Naive thymus-derived CD4-positive, alpha-beta T cell (primary cell): ENCODE measurements at regions of chr5 and their contacts with region 1.

Region 1: DNA sequence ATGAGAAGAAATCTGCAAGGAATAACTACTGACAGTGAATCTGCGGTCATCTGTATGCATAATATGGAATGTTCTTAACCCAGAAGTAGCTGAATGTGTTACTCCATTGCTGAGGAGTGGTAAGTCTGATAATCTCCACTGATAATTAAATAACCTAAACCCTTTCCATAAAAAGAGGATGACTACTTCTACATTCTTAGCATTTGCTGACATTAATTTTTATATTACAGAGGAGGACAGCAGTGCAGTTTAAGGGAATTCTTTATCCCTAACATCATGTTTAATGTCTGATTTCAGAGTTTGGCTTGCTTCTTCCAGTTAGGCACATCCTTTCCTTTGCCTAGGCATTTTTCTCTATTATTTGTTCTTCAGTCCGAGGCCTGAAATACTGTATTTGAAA is 52.2 kb downstream of the CDC42SE2 start:
- DNase-seq: no peak
- ATAC-seq: peak; percentile 12
- H3K4me3 ChIP-seq: no peak overlapping the region
- H3K4me3 Mint-ChIP-seq: peak overlapping the region in 6 of 10 donors; percentile 3 to 52 (median 35)
- H3K27ac ChIP-seq: no peak overlapping the region
- H3K27ac Mint-ChIP-seq: peak overlapping the region in 6 of 9 donors; percentile 12 to 79 (median 24)
- H3K4me1 ChIP-seq: peaks cover 22 to 32% of the 10 kb centered on the region in 2 donors
- H3K4me1 Mint-ChIP-seq: peaks cover 51 to 93% (median 78%) of the 10 kb centered on the region in 7 donors
- H3K27me3 ChIP-seq: no peaks in the 10 kb centered on the region
- H3K27me3 Mint-ChIP-seq: no peaks in the 10 kb centered on the region

Region 2: DNA sequence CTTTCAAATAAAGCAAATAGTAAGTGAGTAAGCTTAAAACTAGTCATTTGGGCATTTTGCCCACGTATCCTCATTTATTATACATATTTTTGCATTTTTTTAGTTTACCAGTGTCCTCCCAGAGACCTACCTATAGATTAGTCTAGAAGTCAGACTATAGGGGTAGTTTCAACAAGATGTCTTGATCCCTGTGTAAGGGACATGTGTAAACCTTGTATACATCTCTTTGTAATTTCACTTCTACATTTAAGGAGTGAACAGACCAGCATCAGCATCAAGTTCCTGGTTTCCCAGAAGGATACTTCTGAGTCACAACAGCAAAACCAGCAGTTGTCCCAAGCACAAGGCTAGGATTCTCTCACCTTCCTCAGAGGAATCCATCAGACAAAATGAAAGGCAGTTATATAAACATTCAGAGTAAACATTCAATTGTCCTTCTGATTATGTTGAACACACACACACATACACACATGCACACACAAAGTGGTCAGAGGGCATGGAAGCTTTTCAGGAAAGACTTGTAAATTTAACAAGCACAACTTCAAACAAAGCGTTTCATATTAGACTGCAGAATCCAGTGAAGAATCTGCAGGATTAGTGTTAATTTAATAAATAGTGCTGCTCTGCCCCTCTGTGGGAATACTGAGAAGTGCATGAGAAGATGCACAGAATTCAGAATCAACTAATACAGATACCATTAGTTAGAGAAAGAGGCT is 206.3 kb before region 1 on chr5:
- CTCF ChIA-PET with region 1: no interaction called
- POLR2A ChIA-PET with region 1: no interaction called
- intact Hi-C with region 1: no loop called
- DNase-seq: peak in 7 of 9 donors; percentile 13 to 66 (median 57)
- ATAC-seq: peak; percentile 87
- H3K4me3 ChIP-seq: no peak overlapping the region
- H3K4me3 Mint-ChIP-seq: peak overlapping the region in 1 of 10 donors; percentile 7
- H3K27ac ChIP-seq: no peak overlapping the region
- H3K27ac Mint-ChIP-seq: no peak overlapping the region
- H3K4me1 ChIP-seq: no peaks in the 10 kb centered on the region
- H3K4me1 Mint-ChIP-seq: peaks cover 0 to 17% (median 9%) of the 10 kb centered on the region in 7 donors
- H3K27me3 ChIP-seq: no peaks in the 10 kb centered on the region
- H3K27me3 Mint-ChIP-seq: no peaks in the 10 kb centered on the region

Region 3: GRCh38 chr5:131296213-131296672 is 19.8 kb before region 1 on chr5:
- CTCF ChIA-PET with region 1: no interaction called
- POLR2A ChIA-PET with region 1: interaction called, 3 read pairs
- intact Hi-C with region 1: loop called in 1 of 2 experiments (anchors 2 kb)
- DNase-seq: peak in 1 of 9 donors; percentile 43
- ATAC-seq: peak; percentile 76
- H3K4me3 ChIP-seq: no peak overlapping the region
- H3K4me3 Mint-ChIP-seq: peak overlapping the region; percentile 56 to 76 (median 68)
- H3K27ac ChIP-seq: peak overlapping the region; percentile 40
- H3K27ac Mint-ChIP-seq: peak overlapping the region; percentile 72 to 90 (median 77)
- H3K4me1 ChIP-seq: peaks cover 59 to 88% of the 10 kb centered on the region in 2 donors
- H3K4me1 Mint-ChIP-seq: peaks cover 56 to 92% (median 76%) of the 10 kb centered on the region in 7 donors
- H3K27me3 ChIP-seq: no peaks in the 10 kb centered on the region
- H3K27me3 Mint-ChIP-seq: no peaks in the 10 kb centered on the region

Region 4: DNA sequence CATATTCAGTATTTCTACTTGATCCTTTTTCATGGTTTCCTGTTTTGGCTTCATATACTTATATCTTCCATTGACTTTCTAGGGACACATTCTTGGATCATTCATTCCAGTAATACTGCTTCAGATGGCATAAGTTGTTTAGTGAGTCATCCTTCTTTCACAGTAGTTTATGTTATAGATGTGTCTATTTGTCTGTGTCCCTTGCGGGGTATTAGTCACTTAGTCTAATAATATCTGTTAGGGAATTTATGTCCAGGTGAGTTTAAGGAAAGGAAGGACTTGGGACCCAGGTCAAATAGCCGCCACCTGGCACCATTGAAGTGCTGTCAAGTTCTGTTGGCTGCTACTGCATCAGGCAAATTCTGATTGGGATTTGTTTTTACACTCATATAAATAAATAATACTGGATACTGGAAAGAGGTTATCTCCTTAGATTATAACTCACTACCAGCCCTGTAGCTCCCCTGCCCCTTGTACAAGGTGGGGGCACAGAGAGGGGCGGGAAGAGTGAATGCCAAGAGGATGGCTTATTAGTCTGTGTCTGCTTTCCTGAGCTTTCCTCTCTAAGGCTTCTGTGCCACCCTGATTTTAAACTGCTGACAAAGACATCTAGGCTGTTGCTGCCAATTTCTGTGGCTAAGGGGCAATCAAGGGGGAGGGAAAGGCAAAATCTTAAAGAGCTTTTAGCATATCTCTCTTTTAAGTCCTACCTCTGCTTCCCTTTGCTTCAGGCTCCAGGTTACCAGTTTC is 12.7 kb after region 1 on chr5:
- CTCF ChIA-PET with region 1: interaction called, 5 read pairs
- POLR2A ChIA-PET with region 1: interaction called, 5 read pairs
- intact Hi-C with region 1: loop called in 1 of 2 experiments (anchors 2 kb)
- DNase-seq: peak in 1 of 9 donors; percentile 11
- ATAC-seq: peak; percentile 18
- H3K4me3 ChIP-seq: no peak overlapping the region
- H3K4me3 Mint-ChIP-seq: peak overlapping the region in 9 of 10 donors; percentile 1 to 76 (median 42)
- H3K27ac ChIP-seq: peak overlapping the region; percentile 9
- H3K27ac Mint-ChIP-seq: peak overlapping the region; percentile 44 to 85 (median 73)
- H3K4me1 ChIP-seq: peaks cover 38 to 49% of the 10 kb centered on the region in 2 donors
- H3K4me1 Mint-ChIP-seq: peaks cover 48 to 92% (median 66%) of the 10 kb centered on the region in 7 donors
- H3K27me3 ChIP-seq: no peaks in the 10 kb centered on the region
- H3K27me3 Mint-ChIP-seq: no peaks in the 10 kb centered on the region

Region 5: DNA sequence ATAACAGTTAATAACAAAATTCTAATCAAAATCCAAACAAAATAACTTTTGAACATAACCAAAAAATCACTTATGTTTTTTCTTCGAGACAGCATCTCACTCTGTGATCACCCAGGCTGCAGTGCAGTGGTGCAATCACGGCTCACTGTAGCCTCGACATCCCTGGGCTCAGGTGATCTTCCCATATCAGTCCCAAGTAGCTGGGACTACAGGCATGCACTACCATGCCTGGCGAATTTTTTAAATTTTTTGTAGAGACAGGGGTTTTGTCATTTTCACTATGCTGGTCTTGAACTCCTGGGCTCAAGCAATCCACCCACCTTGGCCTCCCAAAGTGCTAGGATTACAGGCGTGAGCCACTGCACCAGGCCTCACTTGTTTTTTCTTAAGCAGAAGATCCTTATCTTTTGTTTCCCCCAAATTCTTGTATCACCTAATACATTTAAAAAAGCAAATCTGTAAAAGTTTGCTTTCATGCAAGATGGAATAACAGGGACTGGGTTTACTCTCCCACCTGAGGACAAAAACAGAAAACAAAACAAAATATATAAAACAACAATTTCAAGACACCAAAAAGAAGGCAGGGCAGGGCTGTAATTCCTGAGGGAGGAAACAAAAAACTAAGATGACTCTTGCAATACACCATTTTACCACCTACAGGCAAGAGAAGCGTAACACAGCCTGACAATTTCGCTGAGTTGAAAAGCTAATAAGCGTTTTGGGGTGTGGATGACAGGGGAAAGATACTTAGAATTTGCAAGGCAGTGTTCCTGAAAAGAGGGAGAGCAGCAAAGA is 247.6 kb after region 1 on chr5:
- CTCF ChIA-PET with region 1: no interaction called
- POLR2A ChIA-PET with region 1: no interaction called
- intact Hi-C with region 1: no loop called
- DNase-seq: peak in 1 of 9 donors; percentile 10
- ATAC-seq: no peak
- H3K4me3 ChIP-seq: no peak overlapping the region
- H3K4me3 Mint-ChIP-seq: peak overlapping the region in 5 of 10 donors; percentile 1 to 33 (median 19)
- H3K27ac ChIP-seq: no peak overlapping the region
- H3K27ac Mint-ChIP-seq: peak overlapping the region in 7 of 9 donors; percentile 10 to 77 (median 57)
- H3K4me1 ChIP-seq: peaks cover 0 to 11% of the 10 kb centered on the region in 2 donors
- H3K4me1 Mint-ChIP-seq: peaks cover 18 to 74% (median 60%) of the 10 kb centered on the region in 7 donors
- H3K27me3 ChIP-seq: no peaks in the 10 kb centered on the region
- H3K27me3 Mint-ChIP-seq: no peaks in the 10 kb centered on the region

Region 6: GRCh38 chr5:131634996-131635754 is 319.1 kb after region 1 on chr5 and contains the start of gene RAPGEF6:
- CTCF ChIA-PET with region 1: no interaction called
- POLR2A ChIA-PET with region 1: no interaction called
- intact Hi-C with region 1: no loop called
- DNase-seq: peak; percentile 84 to 99 (median 97)
- ATAC-seq: peak; percentile 91
- H3K4me3 ChIP-seq: peak within 1 kb of the TSS; percentile 95
- H3K4me3 Mint-ChIP-seq: peak within 1 kb of the TSS in 5 of 10 donors; percentile 95 to 99 (median 97)
- H3K27ac ChIP-seq: peak within 1 kb of the TSS; percentile 98
- H3K27ac Mint-ChIP-seq: peak within 1 kb of the TSS; percentile 88 to 100 (median 99)
- H3K4me1 ChIP-seq: peaks cover 43 to 49% of the 10 kb centered on the region in 2 donors
- H3K4me1 Mint-ChIP-seq: peaks cover 16 to 44% (median 31%) of the 10 kb centered on the region in 7 donors
- H3K27me3 ChIP-seq: no peaks in the 10 kb centered on the region
- H3K27me3 Mint-ChIP-seq: peaks cover 0 to 3% (median 0%) of the 10 kb centered on the region in 5 donors
- total RNA-seq, gene RAPGEF6: 50.9 to 186 (median 114) TPM